Ovary (tissue), 10 donors: ENCODE measurements at regions of chr16 and their contacts with region 1.

Region 1: DNA sequence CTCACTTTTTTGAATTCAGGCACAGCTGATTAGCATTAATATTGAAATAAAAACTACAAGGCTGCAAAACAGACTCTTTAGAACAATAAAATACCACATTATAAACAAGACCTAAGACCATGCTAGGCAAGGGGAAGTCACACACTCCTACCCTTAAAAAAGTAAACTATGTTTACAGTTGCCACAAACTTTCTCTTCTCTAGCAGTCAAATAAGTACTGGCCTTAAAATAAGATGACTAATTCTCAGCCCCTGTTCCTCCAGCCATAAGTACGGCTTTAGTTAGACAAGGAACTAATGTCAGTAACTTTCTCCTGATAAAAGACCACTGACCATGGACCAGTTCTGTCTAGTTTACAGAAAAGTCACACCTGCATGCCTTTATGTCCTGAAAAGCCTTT is 19.5 kb upstream of the CPHXL start:
- DNase-seq: no peak
- H3K4me3 ChIP-seq: no peak overlapping the region
- H3K27ac ChIP-seq: no peak overlapping the region
- H3K4me1 ChIP-seq: no peaks in the 10 kb centered on the region
- H3K27me3 ChIP-seq: no peaks in the 10 kb centered on the region
- CTCF ChIP-seq: no peak
- EP300 ChIP-seq: no peak
- POLR2A ChIP-seq: no peak

Region 2: DNA sequence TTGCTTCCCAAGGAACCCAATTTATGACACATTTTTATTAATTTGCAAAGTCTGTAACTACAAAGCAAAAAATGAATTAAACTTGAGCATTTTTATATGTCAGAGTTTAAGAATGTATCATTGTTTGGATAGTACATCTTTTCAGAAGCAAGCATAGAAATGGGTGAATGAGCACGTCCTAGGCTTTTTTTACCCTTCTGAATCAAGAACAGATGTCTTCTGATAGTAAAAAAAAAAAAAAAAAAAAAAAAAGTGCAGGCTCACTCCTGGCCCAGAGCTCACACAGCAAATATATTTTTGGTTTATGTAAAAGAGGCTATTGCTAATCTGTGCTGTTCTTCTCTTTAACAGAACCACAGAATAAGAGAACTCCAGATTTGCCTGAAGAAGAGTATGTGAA is 91.9 kb before region 1 on chr16:
- intact Hi-C with region 1: loop called in 1 of 4 experiments (anchors 10 kb)
- DNase-seq: no peak
- H3K4me3 ChIP-seq: no peak overlapping the region
- H3K27ac ChIP-seq: no peak overlapping the region
- H3K4me1 ChIP-seq: peaks cover 6% of the 10 kb centered on the region
- H3K27me3 ChIP-seq: no peaks in the 10 kb centered on the region
- CTCF ChIP-seq: no peak
- EP300 ChIP-seq: no peak
- POLR2A ChIP-seq: no peak